Activated naive CD4-positive, alpha-beta T cell treated with anti-CD3 and anti-CD28 coated beads, Interleukin-2, amount 10 ng/mL, durations not matched to agents 7 days and 5 days (primary cell): ENCODE measurements at regions of chr14 and their contacts with region 1.

Region 1: DNA sequence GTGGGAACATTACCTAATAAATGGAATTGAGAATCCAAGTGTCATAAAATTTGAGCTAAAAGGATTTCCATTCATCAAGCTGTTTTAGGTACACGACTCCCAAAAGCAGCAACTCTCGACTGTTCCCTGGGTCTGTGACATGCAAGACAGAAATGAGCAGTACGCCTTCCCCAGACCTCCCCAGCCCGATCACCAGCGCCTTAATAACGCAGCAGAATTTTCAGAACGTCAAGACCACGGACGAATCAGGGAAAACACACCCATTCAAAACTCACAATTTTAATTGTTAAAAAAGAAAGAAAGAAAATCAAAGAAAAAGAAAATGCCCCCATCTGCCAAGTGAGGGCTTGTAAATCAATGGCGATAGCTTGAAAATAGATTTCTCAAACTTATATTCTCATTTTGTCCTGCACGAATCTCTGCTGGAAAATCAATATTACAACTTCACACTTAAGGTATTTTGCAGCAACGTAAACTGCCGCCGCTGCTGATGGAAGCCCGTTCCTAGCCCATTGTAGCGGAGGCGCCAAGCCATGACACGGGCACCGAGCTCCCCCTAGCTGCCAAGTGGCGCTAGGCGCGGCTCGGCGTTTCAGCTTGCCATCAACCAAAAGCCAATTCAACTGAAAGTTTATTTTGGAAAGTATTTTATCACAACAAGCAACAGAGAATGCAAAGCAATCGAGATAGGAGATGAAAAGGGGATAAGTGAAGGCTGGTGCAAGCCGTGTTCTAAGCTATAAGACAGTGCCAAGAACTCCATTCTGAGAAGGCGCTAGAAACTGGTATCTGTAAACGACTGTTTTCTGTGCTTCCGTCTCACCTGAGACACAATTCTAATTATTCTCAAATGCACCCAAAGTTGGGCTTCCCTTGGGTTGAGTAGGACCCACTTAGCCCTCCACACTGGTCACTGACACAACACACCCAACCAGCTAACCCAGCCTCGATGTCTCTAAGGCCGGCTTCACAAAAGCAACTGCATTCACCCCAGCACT is 5.5 kb downstream of the BCL11B start:
- DNase-seq: peak; percentile 91
- H3K4me3 Mint-ChIP-seq: peak overlapping the region; percentile 92
- H3K27ac Mint-ChIP-seq: peak overlapping the region; percentile 100
- H3K4me1 Mint-ChIP-seq: peaks cover 50% of the 10 kb centered on the region
- H3K27me3 Mint-ChIP-seq: peaks cover 6% of the 10 kb centered on the region

Region 2: DNA sequence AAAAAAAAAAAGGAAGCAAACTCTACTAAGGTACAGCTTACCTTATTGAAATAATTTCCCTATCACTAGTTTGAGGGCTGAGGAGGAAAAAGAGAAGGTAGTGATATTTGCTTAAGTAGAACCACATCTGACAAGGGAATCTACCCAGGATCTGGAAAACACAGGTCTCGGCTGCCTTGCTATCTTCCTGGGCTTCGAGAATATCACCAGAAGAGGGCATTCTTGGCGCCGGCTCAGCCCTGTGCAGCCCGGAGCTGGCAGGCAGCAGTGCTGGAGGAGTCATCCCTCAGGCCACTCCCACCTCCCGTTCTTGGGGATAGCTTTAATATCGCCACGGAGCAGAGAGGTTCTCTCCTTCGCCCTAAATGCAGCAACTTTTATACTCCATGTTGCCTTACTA is 1288.1 kb before region 1 on chr14:
- CTCF ChIA-PET with region 1: interaction called, 15 read pairs
- DNase-seq: peak; percentile 86
- H3K4me3 Mint-ChIP-seq: peak overlapping the region; percentile 89
- H3K27ac Mint-ChIP-seq: peak overlapping the region; percentile 98
- H3K4me1 Mint-ChIP-seq: peaks cover 61% of the 10 kb centered on the region
- H3K27me3 Mint-ChIP-seq: no peaks in the 10 kb centered on the region

Region 3: DNA sequence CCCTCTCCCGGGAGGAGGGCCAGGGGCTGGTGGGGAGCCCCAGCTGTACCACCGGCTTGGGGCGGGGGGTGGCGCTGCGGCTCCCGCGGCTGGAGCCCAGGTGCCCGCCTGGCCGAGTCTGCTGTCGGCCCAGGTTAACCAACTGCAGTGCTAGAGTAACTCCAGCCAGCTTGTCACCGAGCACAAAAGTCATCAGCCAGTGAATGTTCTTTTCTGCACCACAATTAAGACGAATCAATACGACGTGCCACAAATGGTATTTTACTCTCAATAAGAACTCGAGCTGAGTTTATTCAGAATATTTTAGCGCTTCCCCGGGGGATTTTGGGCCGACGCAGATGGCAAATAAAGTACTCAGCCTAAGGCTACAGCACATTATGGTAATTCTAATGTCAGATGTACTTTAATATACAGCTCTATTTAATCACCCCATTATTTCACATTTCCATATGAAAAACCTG is 77.7 kb before region 1 on chr14:
- CTCF ChIA-PET with region 1: interaction called, 17 read pairs
- DNase-seq: peak; percentile 58
- H3K4me3 Mint-ChIP-seq: peak overlapping the region; percentile 78
- H3K27ac Mint-ChIP-seq: peak overlapping the region; percentile 95
- H3K4me1 Mint-ChIP-seq: peaks cover 97% of the 10 kb centered on the region
- H3K27me3 Mint-ChIP-seq: no peaks in the 10 kb centered on the region

Region 4: DNA sequence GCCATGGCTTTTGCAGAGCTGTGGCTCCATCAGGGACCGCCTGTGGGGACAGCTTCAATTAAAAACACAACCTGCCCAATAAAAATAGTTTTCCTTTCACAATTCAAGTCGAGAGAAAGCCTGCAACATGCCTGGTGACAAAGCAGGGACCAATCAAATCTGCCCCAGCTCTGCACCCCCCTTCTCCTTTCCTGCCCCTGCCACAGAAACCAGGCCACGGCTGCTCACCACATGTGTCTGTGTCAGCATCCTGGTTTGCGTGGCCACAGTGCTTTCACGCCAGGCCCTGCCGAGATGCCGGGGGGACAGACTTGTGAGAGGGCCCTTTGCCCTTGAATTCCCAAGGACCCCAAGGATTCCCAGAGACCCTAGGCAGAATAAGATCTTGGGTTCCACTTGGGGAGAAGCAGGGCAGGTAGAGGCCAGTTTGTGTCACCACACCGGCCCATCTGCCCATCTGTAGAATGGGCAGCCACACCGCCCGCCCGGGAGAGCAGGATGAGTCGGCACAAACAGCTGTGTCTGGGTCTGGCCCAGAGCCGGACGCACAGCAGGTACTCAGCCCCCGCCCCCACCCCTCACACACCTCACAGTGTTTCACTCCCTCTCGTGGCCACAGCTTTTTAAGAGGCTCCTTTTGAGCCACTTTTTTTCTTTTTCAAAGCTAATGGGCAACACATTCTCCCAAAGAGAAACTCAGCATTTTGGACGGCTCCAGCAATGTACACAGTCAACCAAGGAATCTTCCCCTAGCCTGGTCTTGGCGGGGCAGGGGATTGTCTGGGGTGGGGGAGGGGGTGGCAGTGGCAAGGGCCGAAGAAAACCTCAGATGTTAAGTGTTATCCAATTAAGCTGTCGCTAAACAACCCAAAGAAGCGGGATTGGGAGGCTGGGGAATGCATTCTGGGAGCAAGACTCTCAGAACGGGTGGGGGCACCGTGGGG is 36.0 kb before region 1 on chr14:
- CTCF ChIA-PET with region 1: interaction called, 140 read pairs
- DNase-seq: peak; percentile 93
- H3K4me3 Mint-ChIP-seq: peak overlapping the region; percentile 74
- H3K27ac Mint-ChIP-seq: peak overlapping the region; percentile 99
- H3K4me1 Mint-ChIP-seq: peaks cover 97% of the 10 kb centered on the region
- H3K27me3 Mint-ChIP-seq: peaks cover 4% of the 10 kb centered on the region

Region 5: GRCh38 chr14:99245564-99246511 is 20.6 kb before region 1 on chr14:
- CTCF ChIA-PET with region 1: interaction called, 65 read pairs
- DNase-seq: no peak
- H3K4me3 Mint-ChIP-seq: peak overlapping the region; percentile 81
- H3K27ac Mint-ChIP-seq: peak overlapping the region; percentile 97
- H3K4me1 Mint-ChIP-seq: peaks cover 86% of the 10 kb centered on the region
- H3K27me3 Mint-ChIP-seq: no peaks in the 10 kb centered on the region